ENCODE measurements at regions of chr11 and their contacts with region 1.

Region 1: DNA sequence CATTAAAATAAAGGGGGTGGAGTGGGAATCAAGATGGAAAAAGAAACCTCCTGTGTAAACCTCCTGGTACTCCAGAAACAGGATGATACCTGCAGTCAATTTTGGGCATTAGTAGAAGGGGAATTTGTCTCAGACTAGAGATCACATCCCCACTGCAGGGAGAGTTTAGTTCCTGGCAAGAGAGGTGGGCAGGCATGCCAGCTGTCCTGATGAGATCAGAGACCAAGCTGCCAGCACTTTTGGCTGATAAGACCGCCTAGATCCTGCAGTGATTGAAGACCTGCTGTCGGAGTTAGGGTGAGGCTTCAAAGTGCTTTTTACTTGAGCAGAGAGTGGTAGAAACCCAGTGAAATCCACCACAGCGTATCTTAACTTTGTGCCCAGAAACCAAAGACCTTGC is 29.7 kb upstream of the NELL1 start:
- DNase-seq: no peak
- H3K4me3 ChIP-seq: no peak overlapping the region
- H3K27ac ChIP-seq: no peak overlapping the region
- H3K4me1 ChIP-seq: no peaks in the 10 kb centered on the region
- H3K27me3 ChIP-seq: no peaks in the 10 kb centered on the region
- CTCF ChIP-seq: no peak
- POLR2A ChIP-seq: no peak

Region 2: DNA sequence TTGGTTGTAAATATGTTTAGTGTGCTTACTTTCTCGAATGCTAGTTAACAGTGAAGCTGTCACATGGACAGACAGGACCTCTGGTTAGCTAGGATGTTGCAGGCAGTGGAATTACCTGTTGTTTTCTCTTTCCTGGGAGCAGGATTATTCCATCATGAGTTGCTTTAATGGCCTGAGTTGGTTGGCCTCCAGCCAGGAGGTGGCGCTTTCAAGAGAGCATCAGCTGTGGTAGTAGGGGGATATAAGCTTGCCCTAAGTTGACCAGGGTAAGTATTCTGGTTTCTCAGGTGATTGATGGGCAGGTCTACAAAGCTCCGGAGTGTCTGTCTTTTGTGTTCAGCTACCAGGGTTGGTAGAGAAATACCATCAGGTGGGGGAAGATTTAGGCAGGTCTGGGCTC is 73.2 kb after region 1 on chr11:
- CTCF ChIA-PET with region 1: no interaction called
- POLR2A ChIA-PET with region 1: interaction called, 10 read pairs
- dilution Hi-C with region 1: no loop called
- intact Hi-C with region 1: no loop called
- DNase-seq: no peak
- H3K4me3 ChIP-seq: no peak overlapping the region
- H3K27ac ChIP-seq: no peak overlapping the region
- H3K4me1 ChIP-seq: no peaks in the 10 kb centered on the region
- H3K27me3 ChIP-seq: no peaks in the 10 kb centered on the region
- CTCF ChIP-seq: no peak
- POLR2A ChIP-seq: no peak